ENCODE measurements at regions of chr11 and their contacts with region 1.

Region 1: DNA sequence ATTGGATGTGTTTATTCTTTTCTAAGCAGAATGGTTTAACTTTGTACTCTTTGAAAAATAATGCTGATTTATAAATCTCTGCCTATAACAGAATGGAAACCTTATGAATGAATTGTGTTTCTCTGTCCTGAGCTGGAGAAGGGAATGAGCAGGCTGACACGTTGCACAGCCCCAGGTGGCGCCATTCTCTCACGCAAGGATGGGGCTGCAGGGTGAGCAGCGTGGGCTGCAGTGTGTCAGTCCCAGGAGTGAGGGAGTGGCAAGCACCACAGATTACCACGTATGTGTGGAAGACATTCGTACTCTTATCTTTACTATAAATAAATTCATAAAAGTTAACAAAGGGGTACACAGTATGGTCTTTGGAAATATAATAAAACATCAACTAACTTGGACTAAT is 33.4 kb downstream of the FDX1 start:
- DNase-seq: no peak
- ATAC-seq: peak; percentile 91
- H3K4me3 ChIP-seq: no peak overlapping the region
- H3K27ac ChIP-seq: no peak overlapping the region
- H3K4me1 ChIP-seq: peaks cover 8% of the 10 kb centered on the region
- H3K27me3 ChIP-seq: no peaks in the 10 kb centered on the region
- CTCF ChIP-seq: peak; percentile 80
- EP300 ChIP-seq: no peak
- POLR2A ChIP-seq: no peak
- RAD21 ChIP-seq: no peak

Region 2: DNA sequence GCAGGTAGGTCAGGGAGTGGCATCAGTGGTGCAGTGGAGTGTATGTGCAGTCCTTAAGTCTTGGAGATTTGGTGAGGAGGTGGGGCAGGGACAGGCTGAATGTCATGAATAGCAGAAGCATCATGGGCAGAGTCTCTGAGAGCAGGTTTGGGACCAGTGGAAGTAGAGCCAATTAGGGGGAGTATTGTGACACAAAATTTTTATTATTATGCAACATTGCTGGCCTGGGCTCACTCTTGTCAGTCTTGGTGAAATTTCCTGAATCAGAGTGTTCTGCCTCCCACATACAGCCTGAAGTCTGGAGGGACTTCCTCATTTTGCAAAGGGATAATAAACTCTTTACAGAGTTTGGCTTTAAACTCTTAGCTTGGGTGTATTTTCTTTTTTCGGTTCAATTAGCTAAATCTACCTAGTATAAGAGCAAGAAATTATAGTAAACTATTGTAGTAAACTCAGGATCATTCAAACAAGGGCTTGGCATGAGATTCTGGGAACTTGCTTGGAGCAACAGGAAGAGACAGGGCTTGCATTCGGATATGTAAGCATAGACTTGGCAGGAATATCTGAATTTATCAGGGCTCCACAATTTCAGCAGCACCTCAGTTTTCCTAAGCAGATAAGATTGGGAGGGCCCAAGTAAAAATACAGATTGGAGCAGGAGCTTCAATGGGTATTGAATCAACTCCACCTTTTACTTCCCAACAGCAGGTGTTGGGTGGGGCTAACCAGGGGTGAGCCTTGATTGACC is 34.3 kb after region 1 on chr11:
- CTCF ChIA-PET with region 1: no interaction called
- POLR2A ChIA-PET with region 1: no interaction called
- in situ Hi-C with region 1: no loop called
- intact Hi-C with region 1: no loop called
- DNase-seq: no peak
- ATAC-seq: no peak
- H3K4me3 ChIP-seq: no peak overlapping the region
- H3K27ac ChIP-seq: no peak overlapping the region
- H3K4me1 ChIP-seq: no peaks in the 10 kb centered on the region
- H3K27me3 ChIP-seq: peaks cover 0 to 4% of the 10 kb centered on the region in 2 experiments; a peak in 1 of 5 replicates
- CTCF ChIP-seq: no peak
- EP300 ChIP-seq: no peak
- POLR2A ChIP-seq: no peak
- RAD21 ChIP-seq: no peak

Region 3: GRCh38 chr11:110529043-110529442 is 65.9 kb after region 1 on chr11:
- CTCF ChIA-PET with region 1: no interaction called
- POLR2A ChIA-PET with region 1: no interaction called
- in situ Hi-C with region 1: no loop called
- intact Hi-C with region 1: loop called (anchors 1 kb)
- DNase-seq: peak; percentile 5
- ATAC-seq: no peak
- H3K4me3 ChIP-seq: no peak overlapping the region
- H3K27ac ChIP-seq: no peak overlapping the region
- H3K4me1 ChIP-seq: no peaks in the 10 kb centered on the region
- H3K27me3 ChIP-seq: no peaks in the 10 kb centered on the region; a peak in 2 of 5 replicates
- CTCF ChIP-seq: 0 out of 2 replicates have a peak, but pooled peaks have one; percentile 20
- EP300 ChIP-seq: no peak
- POLR2A ChIP-seq: no peak
- RAD21 ChIP-seq: no peak

Region 4: DNA sequence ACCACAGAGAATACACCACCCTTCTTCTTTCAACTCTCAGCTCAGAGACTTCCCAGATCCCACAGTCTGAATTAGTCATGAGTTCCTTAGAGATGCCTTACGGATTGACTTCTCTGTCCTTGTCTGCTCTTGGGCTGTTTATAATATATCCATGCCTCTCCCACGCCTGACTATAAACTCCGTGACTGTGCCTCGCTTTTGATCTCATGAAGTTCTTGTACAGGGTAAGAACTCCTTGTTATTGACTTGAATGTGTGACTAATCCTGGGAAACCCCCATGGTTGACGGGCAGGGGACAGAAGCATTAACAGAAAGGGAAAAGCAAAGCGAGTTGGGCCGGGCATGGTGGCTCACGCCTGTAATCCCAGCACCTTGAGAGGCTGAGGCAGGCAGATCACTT is 978.3 kb after region 1 on chr11:
- CTCF ChIA-PET with region 1: no interaction called
- POLR2A ChIA-PET with region 1: no interaction called
- in situ Hi-C with region 1: loop called (anchors 5 kb)
- intact Hi-C with region 1: no loop called
- DNase-seq: no peak
- ATAC-seq: no peak
- H3K4me3 ChIP-seq: no peak overlapping the region
- H3K27ac ChIP-seq: no peak overlapping the region
- H3K4me1 ChIP-seq: peaks cover 47% of the 10 kb centered on the region
- H3K27me3 ChIP-seq: peaks cover 0 to 9% of the 10 kb centered on the region in 2 experiments; a peak in 1 of 5 replicates
- CTCF ChIP-seq: no peak
- EP300 ChIP-seq: no peak
- POLR2A ChIP-seq: no peak
- RAD21 ChIP-seq: no peak